Mucosa of descending colon (tissue), 3 donors: ENCODE measurements at regions of chr19 and their contacts with region 1.

Region 1: DNA sequence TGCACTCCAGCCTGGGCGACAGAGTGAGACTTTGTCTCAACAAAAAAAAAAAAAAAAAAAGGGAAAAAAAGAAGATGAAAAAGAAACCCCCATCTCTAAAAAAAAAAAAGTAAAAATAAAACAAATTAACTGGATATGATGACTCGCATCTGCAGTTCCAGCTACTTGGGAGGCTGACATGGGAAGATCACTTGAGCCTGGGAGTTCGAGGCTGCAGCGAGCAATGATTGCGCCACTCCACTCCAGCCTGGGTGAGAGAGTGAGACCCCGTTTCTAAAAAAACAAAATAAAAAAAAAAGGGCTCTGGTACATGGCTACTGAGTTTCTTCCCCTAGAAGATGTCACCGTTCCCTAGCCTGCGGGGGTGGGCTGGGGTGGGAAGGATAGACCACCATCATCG is 2.4 kb upstream of the CATSPERG start:
- DNase-seq: no peak
- ATAC-seq: no peak
- H3K4me3 ChIP-seq: no peak overlapping the region
- H3K4me1 ChIP-seq: peaks cover 5% of the 10 kb centered on the region
- CTCF ChIP-seq: no peak

Region 2: DNA sequence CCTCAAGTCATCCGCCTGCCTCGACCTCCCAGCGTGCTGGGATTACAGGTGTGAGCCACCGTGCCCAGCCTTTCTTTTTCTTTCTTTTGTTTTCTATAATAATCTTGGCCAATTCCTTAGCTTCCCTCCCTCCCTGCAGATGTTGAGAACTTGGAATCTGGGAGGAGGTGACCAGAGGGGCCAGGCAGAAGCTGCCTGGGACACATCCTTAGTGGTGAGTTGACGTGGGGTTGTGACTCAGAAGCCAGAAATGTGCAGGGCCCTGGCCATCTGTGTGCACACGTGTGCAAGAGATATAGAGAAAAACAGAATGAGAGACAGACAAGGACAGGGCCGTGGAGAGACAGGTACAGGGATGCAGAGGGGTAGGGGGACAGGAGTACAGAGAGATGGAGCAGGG is 272.0 kb before region 1 on chr19:
- intact Hi-C with region 1: no loop called
- DNase-seq: no peak
- ATAC-seq: no peak
- H3K4me3 ChIP-seq: no peak overlapping the region
- H3K4me1 ChIP-seq: peaks cover 13% of the 10 kb centered on the region
- CTCF ChIP-seq: no peak

Region 3: DNA sequence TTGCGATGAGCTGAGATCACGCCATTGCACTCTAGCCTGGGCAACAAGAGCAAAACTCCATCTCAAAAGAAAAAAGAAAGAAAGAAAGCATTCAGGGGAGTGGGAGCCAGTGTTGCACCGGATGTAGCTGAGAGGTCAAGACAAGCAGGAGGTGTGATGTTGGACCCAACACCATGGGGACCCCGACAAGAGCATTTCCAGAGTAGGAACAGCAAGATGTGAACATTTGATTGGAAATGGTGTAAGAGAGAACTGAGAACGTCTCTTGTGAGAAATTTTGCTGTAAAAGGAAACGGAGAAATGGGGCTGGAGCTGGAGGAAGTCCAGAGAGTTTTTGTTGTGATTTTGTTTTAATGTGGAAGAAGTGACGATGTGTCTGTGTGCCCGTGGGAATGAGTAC is 93.4 kb before region 1 on chr19:
- intact Hi-C with region 1: loop called (anchors 2 to 5 kb)
- DNase-seq: no peak
- ATAC-seq: no peak
- H3K4me3 ChIP-seq: no peak overlapping the region
- H3K4me1 ChIP-seq: peaks cover 11% of the 10 kb centered on the region
- CTCF ChIP-seq: no peak

Region 4: GRCh38 chr19:38245826-38246498 is 87.3 kb before region 1 on chr19:
- intact Hi-C with region 1: loop called (anchors 2 to 5 kb)
- DNase-seq: no peak
- ATAC-seq: no peak
- H3K4me3 ChIP-seq: no peak overlapping the region
- H3K4me1 ChIP-seq: peaks cover 27% of the 10 kb centered on the region
- CTCF ChIP-seq: no peak